Caco-2 (cell line): ENCODE measurements at regions of chr9 and their contacts with region 1.

Region 1: DNA sequence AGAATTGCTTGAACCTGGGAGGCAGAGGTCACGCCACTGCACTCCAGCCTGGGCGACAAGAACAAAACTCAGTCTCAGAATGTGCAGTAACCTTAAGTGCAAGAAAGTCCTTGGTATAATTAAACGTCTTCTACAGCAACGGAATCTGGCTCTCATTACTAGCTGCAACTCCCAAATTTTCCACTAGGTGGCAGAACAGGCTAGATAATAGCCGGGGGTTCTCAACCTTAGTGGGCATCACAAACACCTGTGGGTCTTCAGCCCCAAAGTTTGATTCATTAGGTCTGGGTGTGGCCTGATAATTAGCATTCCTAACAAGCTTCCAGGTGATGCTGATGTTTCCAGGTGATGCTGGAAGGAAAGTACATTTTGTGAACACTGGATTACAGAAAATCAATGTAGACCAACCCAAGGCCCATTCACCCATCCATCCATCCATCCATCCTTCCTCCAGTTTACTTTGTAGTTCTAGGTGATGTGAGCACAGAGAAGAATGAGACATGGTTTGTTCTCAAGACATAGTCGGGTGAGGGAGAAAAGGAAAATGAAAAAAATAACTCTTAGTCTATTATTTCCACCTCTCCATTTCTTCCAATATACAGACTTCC is 37.3 kb downstream of the FBXW2 start:
- DNase-seq: peak; percentile 54 to 76
- H3K4me3 ChIP-seq: no peak overlapping the region
- H3K4me3 Mint-ChIP-seq: no peak overlapping the region
- H3K27ac Mint-ChIP-seq: no peak overlapping the region
- H3K4me1 ChIP-seq: no peaks in the 10 kb centered on the region
- H3K4me1 Mint-ChIP-seq: no peaks in the 10 kb centered on the region
- H3K27me3 ChIP-seq: no peaks in the 10 kb centered on the region
- H3K27me3 Mint-ChIP-seq: no peaks in the 10 kb centered on the region
- CTCF ChIP-seq: peak; percentile 79 to 87

Region 2: DNA sequence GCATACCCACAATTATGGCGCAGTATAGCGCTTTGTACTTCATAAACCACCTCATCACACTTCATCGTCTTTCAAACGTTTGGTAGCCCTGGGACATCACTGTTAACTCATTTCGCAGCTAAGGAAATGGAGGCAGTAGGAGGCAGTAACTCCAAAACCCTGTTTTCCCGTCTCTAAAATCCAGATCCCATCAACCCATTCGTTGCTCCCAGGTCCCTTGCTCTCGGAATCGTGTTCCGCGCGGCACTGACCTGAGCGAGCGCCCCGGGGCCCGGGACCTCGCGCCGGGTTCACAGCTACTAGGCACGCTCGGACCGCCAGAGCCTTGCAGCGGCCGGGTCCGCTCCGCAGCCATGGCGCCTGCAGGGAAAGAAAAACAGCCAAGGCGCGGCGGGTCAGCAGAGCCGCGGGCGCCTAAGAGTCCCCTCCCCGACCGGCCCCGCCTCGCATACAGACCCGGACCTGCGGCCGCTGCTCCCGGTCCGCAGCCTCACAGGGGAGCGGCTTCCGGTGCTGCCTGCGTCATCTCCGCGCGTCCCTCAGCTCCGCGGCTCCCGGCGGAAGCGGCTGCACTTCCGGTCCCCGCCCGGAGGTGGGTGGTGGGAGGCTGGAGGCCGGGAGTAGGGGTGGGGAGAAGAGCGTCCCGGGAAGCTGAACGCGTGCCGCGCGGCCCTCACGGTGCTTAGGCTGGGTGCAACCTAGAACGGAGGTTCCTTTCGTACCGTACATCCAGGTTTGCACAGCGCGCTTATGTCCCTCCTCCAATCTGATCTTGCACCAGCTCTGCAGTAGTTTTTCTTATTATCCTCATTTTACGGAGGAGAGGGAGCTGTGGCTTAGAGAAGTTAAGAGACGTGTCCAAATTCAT is 37.2 kb after region 1 on chr9 and contains the start of gene FBXW2:
- CTCF ChIA-PET with region 1: no interaction called
- POLR2A ChIA-PET with region 1: no interaction called
- intact Hi-C with region 1: loop called (anchors 5 kb)
- DNase-seq: peak; percentile 94
- H3K4me3 ChIP-seq: peak within 1 kb of the TSS; percentile 58
- H3K4me3 Mint-ChIP-seq: peak within 1 kb of the TSS; percentile 86
- H3K27ac Mint-ChIP-seq: peak within 1 kb of the TSS; percentile 90
- H3K4me1 ChIP-seq: peaks cover 10% of the 10 kb centered on the region
- H3K4me1 Mint-ChIP-seq: peaks cover 9% of the 10 kb centered on the region
- H3K27me3 ChIP-seq: no peaks in the 10 kb centered on the region
- H3K27me3 Mint-ChIP-seq: no peaks in the 10 kb centered on the region
- CTCF ChIP-seq: no peak
- total RNA-seq, gene FBXW2: 72.7 and 74.3 TPM in 2 replicates

Region 3: DNA sequence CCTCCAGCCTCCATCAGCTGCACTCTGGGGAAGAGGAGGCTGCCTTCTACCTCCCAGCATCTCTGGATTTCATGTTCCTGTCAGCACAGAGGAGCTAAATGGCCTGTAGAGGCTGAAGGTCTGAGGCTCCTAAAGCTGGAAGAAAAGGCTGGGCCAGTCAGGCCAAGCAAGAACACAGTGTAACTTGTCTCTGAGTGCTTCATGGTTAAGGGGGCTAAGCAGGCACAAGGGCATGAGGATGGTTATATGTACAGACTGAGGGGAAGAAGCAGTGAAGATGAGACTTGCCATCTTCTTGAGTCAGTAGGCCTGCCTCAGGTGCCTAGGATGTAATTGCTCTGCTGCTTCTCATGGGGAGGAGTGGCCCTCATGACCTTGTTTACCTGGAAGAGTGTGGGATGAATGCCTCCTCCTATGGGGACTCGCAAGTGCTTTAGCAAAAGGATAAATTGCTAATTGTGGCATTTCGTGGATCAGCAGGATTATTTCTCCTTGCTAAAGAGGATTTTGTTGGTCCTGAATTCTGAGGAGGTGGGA is 95.5 kb after region 1 on chr9:
- CTCF ChIA-PET with region 1: interaction called, 11 read pairs
- POLR2A ChIA-PET with region 1: no interaction called
- intact Hi-C with region 1: no loop called
- DNase-seq: no peak
- H3K4me3 ChIP-seq: no peak overlapping the region
- H3K4me3 Mint-ChIP-seq: no peak overlapping the region
- H3K27ac Mint-ChIP-seq: no peak overlapping the region
- H3K4me1 ChIP-seq: peaks cover 19% of the 10 kb centered on the region
- H3K4me1 Mint-ChIP-seq: peaks cover 24% of the 10 kb centered on the region
- H3K27me3 ChIP-seq: no peaks in the 10 kb centered on the region
- H3K27me3 Mint-ChIP-seq: no peaks in the 10 kb centered on the region
- CTCF ChIP-seq: no peak

Region 4: DNA sequence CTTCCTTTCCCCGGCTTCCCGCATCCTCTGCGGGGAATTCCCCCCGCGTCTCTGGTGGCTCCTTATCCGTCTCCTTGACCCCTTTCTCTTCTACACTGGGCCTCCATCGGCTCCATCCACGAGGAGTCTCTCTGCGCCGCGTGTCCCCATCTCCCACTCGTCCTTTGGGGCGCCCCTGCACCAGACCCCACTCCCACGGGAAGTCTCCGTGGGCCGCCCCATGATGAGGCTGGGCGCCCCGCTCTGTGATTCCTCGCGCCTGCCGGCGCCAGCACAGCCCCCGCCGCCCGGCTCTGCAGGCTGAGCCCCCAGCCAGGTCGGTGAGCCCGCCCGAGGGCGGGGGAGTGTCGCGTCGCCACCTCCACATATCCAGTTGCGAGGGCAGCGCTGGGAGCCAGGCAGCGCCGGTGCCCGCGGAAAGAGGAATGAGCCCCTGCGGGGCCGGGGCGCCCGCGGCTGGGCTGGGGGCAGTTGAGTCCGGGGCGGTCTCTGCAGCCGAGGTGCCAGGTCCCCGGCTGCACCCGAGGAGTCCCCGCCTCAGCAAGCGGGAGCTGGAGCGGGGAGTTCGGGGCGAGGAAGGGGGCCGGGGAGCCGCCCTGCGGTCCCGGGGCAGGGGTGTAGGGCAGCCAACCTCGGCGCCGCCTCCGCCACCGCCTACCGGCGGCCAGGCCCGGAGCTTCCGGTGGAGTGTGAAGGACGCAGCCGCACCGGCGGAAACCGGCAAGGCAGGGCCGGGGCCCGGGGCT is 172.7 kb after region 1 on chr9:
- CTCF ChIA-PET with region 1: no interaction called
- POLR2A ChIA-PET with region 1: no interaction called
- intact Hi-C with region 1: loop called (anchors 2 kb)
- DNase-seq: peak; percentile 61 to 77
- H3K4me3 ChIP-seq: peak overlapping the region; percentile 64
- H3K4me3 Mint-ChIP-seq: peak overlapping the region; percentile 72
- H3K27ac Mint-ChIP-seq: peak overlapping the region; percentile 53
- H3K4me1 ChIP-seq: peaks cover 5% of the 10 kb centered on the region; the same call in 1 of the 2 replicates
- H3K4me1 Mint-ChIP-seq: peaks cover 7% of the 10 kb centered on the region
- H3K27me3 ChIP-seq: peaks cover 2% of the 10 kb centered on the region; the same call in 1 of the 2 replicates
- H3K27me3 Mint-ChIP-seq: no peaks in the 10 kb centered on the region
- CTCF ChIP-seq: no peak